Right ventricle myocardium inferior (tissue), 1 donor: ENCODE measurements at regions of chr22 and their contacts with region 1.

Region 1: DNA sequence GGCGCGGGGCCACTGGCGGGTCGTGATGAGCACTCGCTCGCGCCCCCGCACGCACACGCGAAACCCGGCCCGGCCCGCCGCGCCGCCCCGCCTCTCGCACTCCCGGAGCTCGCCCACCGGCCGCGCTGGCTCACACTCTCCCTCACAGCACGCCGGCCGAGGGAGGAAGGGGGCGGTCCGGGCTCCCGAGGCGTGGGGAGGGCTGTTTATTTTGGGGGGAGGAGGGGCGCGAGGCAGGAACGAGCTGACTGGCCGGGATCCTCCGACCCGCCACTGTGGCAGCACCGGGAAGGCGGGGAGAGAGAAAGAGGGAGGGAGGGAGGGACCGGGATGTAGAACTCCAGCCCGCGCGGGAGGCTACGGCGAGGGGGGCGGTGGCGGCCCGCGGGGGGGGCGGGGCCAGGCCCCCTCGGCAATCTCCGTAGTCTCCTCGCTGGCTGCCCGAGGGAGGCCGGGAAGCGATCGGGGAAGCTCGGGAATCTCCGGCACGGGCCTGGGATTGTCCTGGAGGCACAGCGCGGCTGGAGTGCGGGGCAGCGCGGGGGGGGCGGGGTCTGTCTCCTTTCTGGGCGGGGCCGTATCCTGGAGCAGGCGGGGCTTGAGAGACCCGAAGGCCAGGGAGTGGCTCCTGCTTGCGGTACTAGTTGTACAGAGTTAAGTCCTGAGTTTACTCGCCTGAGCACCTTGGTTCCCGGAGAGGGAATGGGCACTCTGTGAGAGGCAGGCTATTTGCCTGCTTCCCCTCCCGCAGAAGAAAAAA is at the start of gene RBFOX2:
- DNase-seq: peak; percentile 95
- ATAC-seq: peak; percentile 98
- total RNA-seq, gene RBFOX2: 84.4 TPM

Region 2: GRCh38 chr22:35446365-35446764 is 582.5 kb before region 1 on chr22:
- intact Hi-C with region 1: no loop called
- DNase-seq: no peak
- ATAC-seq: no peak

Region 3: GRCh38 chr22:35930933-35931332 is 97.9 kb before region 1 on chr22:
- intact Hi-C with region 1: loop called (anchors 2 kb)
- DNase-seq: no peak
- ATAC-seq: peak; percentile 94

Region 4: GRCh38 chr22:35947794-35948425 is 80.9 kb before region 1 on chr22:
- intact Hi-C with region 1: no loop called
- DNase-seq: no peak
- ATAC-seq: no peak

Region 5: GRCh38 chr22:35971456-35972119 is 57.2 kb before region 1 on chr22:
- intact Hi-C with region 1: loop called (anchors 5 kb)
- DNase-seq: no peak
- ATAC-seq: peak; percentile 83

Region 6: DNA sequence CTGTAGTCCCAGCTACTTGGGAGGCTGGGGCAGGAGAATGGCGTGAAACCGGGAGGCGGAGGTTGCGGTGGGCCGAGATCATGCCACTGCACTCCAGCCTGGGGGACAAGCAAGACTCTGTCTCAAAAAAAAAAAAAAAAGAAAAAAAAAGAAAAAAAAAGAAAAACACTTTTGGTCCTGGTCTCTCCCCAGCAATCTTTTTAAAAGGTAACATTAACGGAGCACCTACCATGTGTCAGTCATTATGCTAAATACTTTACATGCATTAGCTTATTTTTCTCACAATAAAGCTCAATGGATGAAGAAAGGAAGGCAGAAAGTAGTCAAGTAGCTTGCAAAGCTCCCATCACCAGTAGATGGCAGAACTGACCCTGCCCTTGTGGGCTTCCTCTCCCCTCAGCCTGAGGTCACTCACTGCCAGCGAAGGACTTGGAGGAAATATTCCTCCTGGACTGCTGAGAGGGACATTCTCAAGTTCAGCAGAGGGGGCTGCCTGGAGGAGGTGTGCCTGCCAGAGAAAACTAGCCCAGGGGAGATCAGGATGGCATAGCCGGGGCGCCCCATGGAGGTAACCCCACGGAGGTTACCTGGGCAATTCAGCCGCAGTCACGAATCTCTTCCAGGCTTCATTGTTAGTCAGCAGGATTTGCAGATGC is 116.2 kb after region 1 on chr22:
- intact Hi-C with region 1: no loop called
- DNase-seq: no peak
- ATAC-seq: peak; percentile 84